Naive thymus-derived CD4-positive, alpha-beta T cell (primary cell): ENCODE measurements at regions of chr11 and their contacts with region 1.

Region 1: GRCh38 chr11:8964324-8965320 is at the start of gene TMEM9B:
- DNase-seq: peak; percentile 35 to 85 (median 66)
- ATAC-seq: peak; percentile 90
- H3K4me3 ChIP-seq: peak within 1 kb of the TSS; percentile 96
- H3K4me3 Mint-ChIP-seq: peak within 1 kb of the TSS; percentile 94 to 99 (median 98)
- H3K27ac ChIP-seq: peak within 1 kb of the TSS; percentile 92
- H3K27ac Mint-ChIP-seq: peak within 1 kb of the TSS; percentile 94 to 99 (median 98)
- H3K4me1 ChIP-seq: peaks cover 13 to 17% of the 10 kb centered on the region in 2 donors
- H3K4me1 Mint-ChIP-seq: peaks cover 17 to 45% (median 32%) of the 10 kb centered on the region in 7 donors
- H3K27me3 ChIP-seq: no peaks in the 10 kb centered on the region
- H3K27me3 Mint-ChIP-seq: no peaks in the 10 kb centered on the region
- total RNA-seq, gene TMEM9B: 16.2 to 33.6 (median 30.6) TPM

Region 2: DNA sequence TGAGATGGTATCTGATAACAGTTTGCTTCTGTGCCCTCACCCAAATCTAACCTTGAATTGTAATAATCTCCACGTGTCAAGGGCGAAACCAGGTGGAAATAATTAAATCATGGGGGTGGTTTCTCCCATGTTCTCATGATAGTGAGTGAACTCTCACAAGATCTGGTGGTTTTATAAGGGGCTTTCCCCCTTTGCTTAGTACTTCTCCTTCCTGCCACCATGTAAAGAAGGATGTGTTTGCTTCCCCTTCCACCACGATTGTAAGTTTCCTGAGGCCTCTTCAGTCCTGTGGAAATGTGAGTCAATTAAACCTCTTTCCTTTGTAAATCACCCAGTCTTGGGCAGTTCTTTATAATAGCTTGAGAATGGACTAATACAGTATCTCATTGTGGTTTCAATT is 1249.8 kb before region 1 on chr11:
- CTCF ChIA-PET with region 1: no interaction called
- POLR2A ChIA-PET with region 1: no interaction called
- intact Hi-C with region 1: no loop called
- DNase-seq: no peak
- ATAC-seq: no peak
- H3K4me3 ChIP-seq: no peak overlapping the region
- H3K4me3 Mint-ChIP-seq: no peak overlapping the region
- H3K27ac ChIP-seq: no peak overlapping the region
- H3K27ac Mint-ChIP-seq: no peak overlapping the region
- H3K4me1 ChIP-seq: no peaks in the 10 kb centered on the region
- H3K4me1 Mint-ChIP-seq: no peaks in the 10 kb centered on the region
- H3K27me3 ChIP-seq: no peaks in the 10 kb centered on the region
- H3K27me3 Mint-ChIP-seq: peaks cover 0 to 42% (median 28%) of the 10 kb centered on the region in 5 donors

Region 3: GRCh38 chr11:8225589-8226036 is 739.0 kb before region 1 on chr11:
- CTCF ChIA-PET with region 1: no interaction called
- POLR2A ChIA-PET with region 1: no interaction called
- intact Hi-C with region 1: loop called in 1 of 2 experiments (anchors 2 kb)
- DNase-seq: peak; percentile 11 to 66 (median 48)
- ATAC-seq: peak; percentile 65
- H3K4me3 ChIP-seq: no peak overlapping the region
- H3K4me3 Mint-ChIP-seq: no peak overlapping the region
- H3K27ac ChIP-seq: no peak overlapping the region
- H3K27ac Mint-ChIP-seq: no peak overlapping the region
- H3K4me1 ChIP-seq: no peaks in the 10 kb centered on the region
- H3K4me1 Mint-ChIP-seq: peaks cover 0 to 4% (median 0%) of the 10 kb centered on the region in 7 donors
- H3K27me3 ChIP-seq: no peaks in the 10 kb centered on the region
- H3K27me3 Mint-ChIP-seq: peaks cover 0 to 6% (median 0%) of the 10 kb centered on the region in 5 donors

Region 4: GRCh38 chr11:8610532-8611116 is 354.0 kb before region 1 on chr11:
- CTCF ChIA-PET with region 1: no interaction called
- POLR2A ChIA-PET with region 1: no interaction called
- intact Hi-C with region 1: loop called in 1 of 2 experiments (anchors 5 kb)
- DNase-seq: peak in 8 of 9 donors; percentile 11 to 56 (median 32)
- ATAC-seq: peak; percentile 72
- H3K4me3 ChIP-seq: no peak overlapping the region
- H3K4me3 Mint-ChIP-seq: peak overlapping the region in 1 of 10 donors; percentile 27
- H3K27ac ChIP-seq: no peak overlapping the region
- H3K27ac Mint-ChIP-seq: peak overlapping the region in 7 of 9 donors; percentile 26 to 87 (median 72)
- H3K4me1 ChIP-seq: peaks cover 0 to 3% of the 10 kb centered on the region in 2 donors
- H3K4me1 Mint-ChIP-seq: peaks cover 0 to 12% (median 11%) of the 10 kb centered on the region in 7 donors
- H3K27me3 ChIP-seq: no peaks in the 10 kb centered on the region
- H3K27me3 Mint-ChIP-seq: peaks cover 0 to 8% (median 0%) of the 10 kb centered on the region in 5 donors

Region 5: DNA sequence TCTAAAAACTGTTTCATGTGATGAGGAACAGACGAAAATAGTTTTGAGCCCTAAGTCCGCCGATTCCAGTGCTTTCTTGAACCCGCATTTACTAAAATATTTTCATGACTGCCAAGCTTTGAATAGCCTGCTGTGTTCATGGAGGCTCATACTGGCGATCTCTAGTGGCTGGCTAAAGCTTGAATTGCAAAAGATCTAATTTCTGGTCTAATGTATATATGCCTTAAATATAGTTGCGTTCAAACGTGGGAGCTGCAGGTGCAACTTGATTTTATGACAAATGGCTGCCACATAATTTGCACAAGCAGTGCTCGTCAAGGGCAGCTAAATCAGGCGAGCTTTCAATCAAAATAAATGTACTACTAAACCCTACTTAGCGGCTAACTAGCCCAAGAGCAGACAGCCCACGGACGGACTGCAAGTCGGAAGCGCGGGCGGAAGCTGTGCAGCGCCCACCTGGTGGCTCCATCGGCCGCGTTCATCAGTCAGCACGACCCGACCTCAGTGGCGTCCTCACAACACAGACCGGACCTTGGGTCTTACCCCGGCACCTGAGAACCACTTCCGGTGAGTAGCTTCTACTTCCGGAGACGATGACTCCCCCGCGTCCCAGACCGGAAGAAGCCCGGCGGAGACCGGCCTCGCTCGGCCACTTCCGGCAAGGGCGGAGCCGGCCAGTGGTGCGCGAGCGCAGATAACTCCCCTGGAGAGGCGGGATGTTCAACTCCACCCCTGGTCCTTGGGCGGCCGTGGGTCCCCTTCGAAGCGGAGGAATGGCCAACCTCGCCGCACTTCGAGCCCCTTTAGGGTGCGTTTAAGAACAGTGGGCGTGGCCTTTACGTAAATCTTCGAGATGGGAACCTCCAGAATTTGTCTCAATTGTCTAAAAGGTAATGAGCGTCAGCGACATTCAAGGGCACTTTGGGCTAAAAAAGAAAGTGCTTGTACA is 275.9 kb before region 1 on chr11:
- CTCF ChIA-PET with region 1: no interaction called
- POLR2A ChIA-PET with region 1: interaction called, 27 read pairs
- intact Hi-C with region 1: loop called in 1 of 2 experiments (anchors 1 kb)
- DNase-seq: peak; percentile 50 to 86 (median 61)
- ATAC-seq: peak; percentile 92
- H3K4me3 ChIP-seq: peak overlapping the region; percentile 80
- H3K4me3 Mint-ChIP-seq: peak overlapping the region; percentile 89 to 99 (median 96)
- H3K27ac ChIP-seq: peak overlapping the region; percentile 85
- H3K27ac Mint-ChIP-seq: peak overlapping the region; percentile 90 to 99 (median 96)
- H3K4me1 ChIP-seq: peaks cover 15 to 17% of the 10 kb centered on the region in 2 donors
- H3K4me1 Mint-ChIP-seq: peaks cover 20 to 63% (median 45%) of the 10 kb centered on the region in 7 donors
- H3K27me3 ChIP-seq: no peaks in the 10 kb centered on the region
- H3K27me3 Mint-ChIP-seq: no peaks in the 10 kb centered on the region

Region 6: DNA sequence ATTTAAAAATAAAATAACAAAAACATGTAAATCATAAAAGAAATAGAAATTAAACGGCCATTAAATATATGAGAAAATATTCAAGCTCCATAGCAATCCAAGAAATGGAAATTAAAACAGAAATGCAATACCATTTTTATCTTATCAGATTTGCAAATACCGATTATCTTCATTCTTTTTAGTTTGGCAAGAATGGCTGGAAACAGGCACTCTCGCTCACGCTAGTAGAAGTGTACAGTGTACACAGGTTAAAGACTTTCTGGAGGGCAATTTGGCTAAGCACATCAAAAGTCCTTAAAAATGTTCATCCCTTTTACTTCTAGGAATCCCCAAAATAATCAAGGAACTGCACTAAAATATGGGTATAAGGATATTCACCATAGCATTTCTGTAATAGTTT is 113.3 kb before region 1 on chr11:
- CTCF ChIA-PET with region 1: no interaction called
- POLR2A ChIA-PET with region 1: no interaction called
- intact Hi-C with region 1: no loop called
- DNase-seq: no peak
- ATAC-seq: no peak
- H3K4me3 ChIP-seq: no peak overlapping the region
- H3K4me3 Mint-ChIP-seq: no peak overlapping the region
- H3K27ac ChIP-seq: no peak overlapping the region
- H3K27ac Mint-ChIP-seq: no peak overlapping the region
- H3K4me1 ChIP-seq: no peaks in the 10 kb centered on the region
- H3K4me1 Mint-ChIP-seq: no peaks in the 10 kb centered on the region
- H3K27me3 ChIP-seq: no peaks in the 10 kb centered on the region
- H3K27me3 Mint-ChIP-seq: peaks cover 0 to 25% (median 12%) of the 10 kb centered on the region in 5 donors

Region 7: GRCh38 chr11:9137293-9138132 is 172.9 kb after region 1 on chr11:
- CTCF ChIA-PET with region 1: interaction called, 3 read pairs
- POLR2A ChIA-PET with region 1: no interaction called
- intact Hi-C with region 1: loop called in 1 of 2 experiments (anchors 2 kb)
- DNase-seq: peak; percentile 20 to 72 (median 52)
- ATAC-seq: peak; percentile 94
- H3K4me3 ChIP-seq: no peak overlapping the region
- H3K4me3 Mint-ChIP-seq: peak overlapping the region in 6 of 10 donors; percentile 1 to 54 (median 11)
- H3K27ac ChIP-seq: no peak overlapping the region
- H3K27ac Mint-ChIP-seq: peak overlapping the region; percentile 3 to 84 (median 60)
- H3K4me1 ChIP-seq: peaks cover 0 to 3% of the 10 kb centered on the region in 2 donors
- H3K4me1 Mint-ChIP-seq: peaks cover 7 to 35% (median 15%) of the 10 kb centered on the region in 7 donors
- H3K27me3 ChIP-seq: no peaks in the 10 kb centered on the region
- H3K27me3 Mint-ChIP-seq: no peaks in the 10 kb centered on the region